Cardiac septum (tissue), 1 donor: ENCODE measurements at regions of chr15 and their contacts with region 1.

Region 1: GRCh38 chr15:43329960-43330779 is at the start of gene LCMT2:
- DNase-seq: peak; percentile 96
- total RNA-seq, gene LCMT2: 6.4 TPM

Region 2: GRCh38 chr15:43370975-43371974 is 41.1 kb after region 1 on chr15 and contains the starts of genes TUBGCP4 and ZSCAN29:
- intact Hi-C with region 1: loop called (anchors 5 kb)
- DNase-seq: peak; percentile 93
- total RNA-seq, gene TUBGCP4: 10.7 TPM
- total RNA-seq, gene ZSCAN29: 14.0 TPM